Mammary epithelial cell (primary cell): ENCODE measurements at regions of chr1 and their contacts with region 1.

Region 1: DNA sequence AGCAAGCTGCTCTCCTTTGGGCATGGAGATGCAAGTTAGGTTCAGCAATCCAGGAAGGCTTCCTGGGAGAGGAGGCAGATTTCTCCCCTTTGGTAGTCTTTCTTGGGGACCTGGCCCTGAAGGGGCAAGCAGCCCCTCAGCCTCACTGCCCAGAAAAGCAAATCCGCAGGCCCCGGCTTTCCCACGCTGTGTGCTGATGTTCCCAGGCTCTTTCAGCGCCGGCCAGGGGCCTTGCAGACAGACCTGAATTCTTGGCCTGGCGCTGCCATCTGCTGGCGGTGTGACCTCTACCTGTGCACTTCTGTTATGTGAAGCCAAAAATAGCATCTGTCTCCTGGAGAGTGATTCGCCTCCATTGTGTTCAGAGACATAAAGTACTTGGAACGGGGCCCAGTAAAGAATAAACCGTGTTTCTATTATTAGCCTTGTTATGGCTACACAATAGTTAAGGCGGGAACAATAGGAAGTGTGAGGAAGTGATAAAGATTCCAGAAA is 64.8 kb downstream of the ALPL start:
- DNase-seq: peak; percentile 72
- H3K4me3 ChIP-seq: no peak overlapping the region
- H3K27ac ChIP-seq: no peak overlapping the region
- H3K4me1 ChIP-seq: peaks cover 14% of the 10 kb centered on the region
- H3K27me3 ChIP-seq: no peaks in the 10 kb centered on the region
- CTCF ChIP-seq: peak; percentile 55 to 74

Region 2: GRCh38 chr1:21255278-21255942 is 318.6 kb before region 1 on chr1:
- CTCF ChIA-PET with region 1: no interaction called
- dilution Hi-C with region 1: no loop called
- in situ Hi-C with region 1: no loop called
- intact Hi-C with region 1: loop called (anchors 10 kb)
- DNase-seq: peak; percentile 72
- H3K4me3 ChIP-seq: no peak overlapping the region
- H3K27ac ChIP-seq: no peak overlapping the region
- H3K4me1 ChIP-seq: peaks cover 33% of the 10 kb centered on the region
- H3K27me3 ChIP-seq: no peaks in the 10 kb centered on the region
- CTCF ChIP-seq: peak; percentile 87 to 91

Region 3: DNA sequence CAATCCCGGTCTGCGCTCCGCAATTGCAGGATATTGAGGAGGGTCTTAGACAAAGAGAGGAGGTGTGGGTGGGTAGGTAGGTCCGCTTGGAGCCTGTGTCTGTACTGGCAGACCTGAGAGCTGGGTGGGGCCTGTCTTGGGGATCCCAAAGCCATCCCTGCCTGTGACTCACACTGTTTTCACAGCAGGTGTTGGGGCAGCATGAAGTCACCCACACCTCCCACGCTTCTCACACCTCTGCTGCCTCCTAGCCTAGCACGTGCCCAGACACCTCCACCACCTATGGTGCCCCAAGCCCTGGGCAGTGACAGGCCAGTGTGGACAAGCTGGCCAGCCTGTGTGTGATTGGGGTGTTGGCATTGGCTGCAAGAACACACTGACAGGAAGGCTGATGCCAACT is 218.1 kb before region 1 on chr1:
- CTCF ChIA-PET with region 1: no interaction called
- dilution Hi-C with region 1: no loop called
- in situ Hi-C with region 1: no loop called
- intact Hi-C with region 1: no loop called
- DNase-seq: peak; percentile 44
- H3K4me3 ChIP-seq: no peak overlapping the region
- H3K27ac ChIP-seq: no peak overlapping the region
- H3K4me1 ChIP-seq: peaks cover 6% of the 10 kb centered on the region
- H3K27me3 ChIP-seq: peaks cover 2% of the 10 kb centered on the region
- CTCF ChIP-seq: no peak

Region 4: GRCh38 chr1:21534674-21535378 is 39.2 kb before region 1 on chr1:
- CTCF ChIA-PET with region 1: no interaction called
- dilution Hi-C with region 1: no loop called
- in situ Hi-C with region 1: no loop called
- intact Hi-C with region 1: loop called (anchors 5 kb)
- DNase-seq: peak; percentile 62
- H3K4me3 ChIP-seq: no peak overlapping the region
- H3K27ac ChIP-seq: no peak overlapping the region
- H3K4me1 ChIP-seq: no peaks in the 10 kb centered on the region
- H3K27me3 ChIP-seq: peaks cover 2% of the 10 kb centered on the region
- CTCF ChIP-seq: peak in 1 of 2 donors; percentile 31

Region 5: DNA sequence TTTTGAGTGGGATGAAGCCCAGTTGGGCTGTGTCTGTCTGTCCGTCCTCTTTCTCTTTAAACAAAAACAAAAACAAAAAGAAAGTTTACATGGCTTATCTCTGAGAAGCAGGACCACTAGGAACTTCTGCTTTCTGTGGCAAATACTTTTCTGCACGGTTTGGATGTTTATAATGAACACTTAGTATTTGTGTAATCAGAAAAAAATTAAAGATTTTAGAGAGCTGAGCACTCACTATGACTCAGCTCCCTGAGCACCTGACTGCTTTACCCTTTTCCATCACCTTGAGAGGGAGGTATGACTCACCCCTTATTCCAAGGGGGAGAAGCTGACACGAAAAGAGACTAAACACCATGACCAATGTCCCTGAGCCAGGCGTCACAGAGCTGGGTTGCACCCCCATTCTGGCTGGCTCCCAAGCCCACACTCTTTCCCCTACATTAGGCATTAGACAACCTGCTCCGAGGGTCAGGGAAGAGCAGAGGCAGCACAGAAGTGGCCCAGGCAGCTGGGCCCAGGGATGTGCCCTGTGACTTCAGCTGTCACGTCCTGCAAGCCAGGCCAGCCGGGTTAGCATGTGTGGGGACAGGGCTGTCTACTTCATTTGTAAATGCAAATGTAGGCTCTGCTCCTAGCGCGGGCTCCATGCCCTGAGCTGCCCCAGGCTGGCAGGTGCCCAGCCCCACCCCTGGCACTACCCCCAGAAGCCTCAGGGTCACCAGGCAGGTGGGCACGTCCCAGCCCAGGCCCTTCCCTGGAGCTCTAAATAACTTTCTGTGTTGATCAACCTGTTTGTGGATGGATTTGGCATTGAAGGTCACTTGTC is 64.7 kb after region 1 on chr1:
- CTCF ChIA-PET with region 1: no interaction called
- dilution Hi-C with region 1: no loop called
- in situ Hi-C with region 1: no loop called
- intact Hi-C with region 1: no loop called
- DNase-seq: peak; percentile 86
- H3K4me3 ChIP-seq: no peak overlapping the region
- H3K27ac ChIP-seq: no peak overlapping the region
- H3K4me1 ChIP-seq: peaks cover 9% of the 10 kb centered on the region
- H3K27me3 ChIP-seq: no peaks in the 10 kb centered on the region
- CTCF ChIP-seq: no peak